ENCODE measurements at regions of chrX and their contacts with region 1.

Region 1: GRCh38 chrX:137549851-137550664 is 15.9 kb upstream of the ZIC3 start:
- DNase-seq: no peak
- H3K4me3 ChIP-seq: no peak overlapping the region
- H3K27ac ChIP-seq: no peak overlapping the region
- H3K4me1 ChIP-seq: no peaks in the 10 kb centered on the region
- H3K27me3 ChIP-seq: peaks cover 2% of the 10 kb centered on the region
- CTCF ChIP-seq: no peak

Region 2: GRCh38 chrX:137519459-137519858 is 30.6 kb before region 1 on chrX:
- CTCF ChIA-PET with region 1: no interaction called
- dilution Hi-C with region 1: loop called (anchors 5 kb)
- in situ Hi-C with region 1: no loop called
- intact Hi-C with region 1: no loop called
- DNase-seq: no peak
- H3K4me3 ChIP-seq: no peak overlapping the region
- H3K27ac ChIP-seq: no peak overlapping the region
- H3K4me1 ChIP-seq: no peaks in the 10 kb centered on the region
- H3K27me3 ChIP-seq: no peaks in the 10 kb centered on the region
- CTCF ChIP-seq: no peak